ENCODE measurements at regions of chr10 and their contacts with region 1.

Region 1: GRCh38 chr10:132654702-132655661 is 117.4 kb downstream of the INPP5A start:
- DNase-seq: peak; percentile 34
- H3K4me3 ChIP-seq: no peak overlapping the region
- H3K27ac ChIP-seq: no peak overlapping the region
- H3K27me3 ChIP-seq: no peaks in the 10 kb centered on the region
- CTCF ChIP-seq: peak; percentile 96

Region 2: DNA sequence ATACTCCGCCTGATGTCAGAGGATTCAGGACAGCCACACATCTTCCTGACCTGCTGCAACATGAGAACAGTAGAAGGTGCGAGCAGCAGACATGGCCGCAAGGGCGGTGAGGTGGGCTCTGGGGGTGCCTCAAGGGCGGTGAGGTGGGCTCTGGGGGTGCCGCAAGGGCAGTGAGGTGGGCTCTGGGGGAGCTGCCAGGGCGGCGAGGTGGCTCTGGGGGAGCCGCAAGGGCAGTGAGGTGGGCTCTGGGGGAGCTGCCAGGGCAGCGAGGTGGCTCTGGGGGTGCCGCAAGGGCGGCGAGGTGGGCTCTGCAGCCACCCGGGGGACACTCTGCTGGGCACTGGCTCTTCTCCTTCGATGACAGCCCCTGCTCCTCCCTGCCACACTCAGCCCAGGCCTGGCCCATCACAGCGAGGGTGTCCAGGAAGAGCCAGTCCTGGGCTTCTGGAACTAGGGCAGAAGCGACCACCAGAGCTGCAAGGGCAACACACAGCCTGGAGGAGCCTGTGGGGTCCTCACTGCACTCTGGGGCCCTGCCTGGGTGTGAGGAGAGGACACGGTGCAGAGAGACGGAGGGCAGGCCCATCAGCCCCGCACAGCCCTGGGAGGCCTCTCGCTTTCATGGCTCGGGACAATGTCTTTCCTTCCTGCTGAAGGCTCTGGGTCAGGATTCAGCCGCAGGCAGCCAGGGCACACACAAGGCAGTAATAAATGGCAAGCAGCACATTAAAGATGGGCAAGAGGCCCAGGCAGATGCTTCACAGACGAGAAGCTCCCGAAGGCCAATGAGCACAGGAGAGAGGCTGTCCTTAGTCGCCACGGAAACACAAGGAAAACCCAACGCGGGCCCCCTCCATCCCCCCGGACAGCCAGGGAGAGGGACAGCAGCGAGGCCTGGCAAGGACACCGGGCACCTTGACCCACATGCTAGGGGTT is 389.7 kb before region 1 on chr10:
- CTCF ChIA-PET with region 1: no interaction called
- POLR2A ChIA-PET with region 1: no interaction called
- DNase-seq: no peak
- H3K4me3 ChIP-seq: no peak overlapping the region
- H3K27ac ChIP-seq: peak overlapping the region; percentile 52
- H3K27me3 ChIP-seq: no peaks in the 10 kb centered on the region
- CTCF ChIP-seq: no peak

Region 3: GRCh38 chr10:132665946-132666704 is 11.1 kb after region 1 on chr10:
- CTCF ChIA-PET with region 1: interaction called, 20 read pairs
- POLR2A ChIA-PET with region 1: no interaction called
- DNase-seq: peak; percentile 63
- H3K4me3 ChIP-seq: peak overlapping the region; percentile 4; the same call in 1 of the 2 replicates
- H3K27ac ChIP-seq: peak overlapping the region; percentile 83
- H3K27me3 ChIP-seq: no peaks in the 10 kb centered on the region
- CTCF ChIP-seq: no peak

Measured in AG04450 (cell line).